ENCODE measurements at regions of chr13 and their contacts with region 1.

Region 1: GRCh38 chr13:83634601-83635000 is 247.7 kb downstream of the SLITRK1 start:
- DNase-seq: no peak
- ATAC-seq: no peak
- H3K4me3 ChIP-seq: no peak overlapping the region
- H3K27ac ChIP-seq: no peak overlapping the region
- H3K4me1 ChIP-seq: no peaks in the 10 kb centered on the region
- H3K27me3 ChIP-seq: no peaks in the 10 kb centered on the region
- CTCF ChIP-seq: no peak

Region 2: GRCh38 chr13:83722443-83722842 is 87.8 kb after region 1 on chr13:
- intact Hi-C with region 1: loop called in 1 of 10 experiments (anchors 10 kb)
- DNase-seq: no peak
- ATAC-seq: no peak
- H3K4me3 ChIP-seq: no peak overlapping the region
- H3K27ac ChIP-seq: no peak overlapping the region
- H3K4me1 ChIP-seq: no peaks in the 10 kb centered on the region
- H3K27me3 ChIP-seq: no peaks in the 10 kb centered on the region
- CTCF ChIP-seq: no peak

Region 3: DNA sequence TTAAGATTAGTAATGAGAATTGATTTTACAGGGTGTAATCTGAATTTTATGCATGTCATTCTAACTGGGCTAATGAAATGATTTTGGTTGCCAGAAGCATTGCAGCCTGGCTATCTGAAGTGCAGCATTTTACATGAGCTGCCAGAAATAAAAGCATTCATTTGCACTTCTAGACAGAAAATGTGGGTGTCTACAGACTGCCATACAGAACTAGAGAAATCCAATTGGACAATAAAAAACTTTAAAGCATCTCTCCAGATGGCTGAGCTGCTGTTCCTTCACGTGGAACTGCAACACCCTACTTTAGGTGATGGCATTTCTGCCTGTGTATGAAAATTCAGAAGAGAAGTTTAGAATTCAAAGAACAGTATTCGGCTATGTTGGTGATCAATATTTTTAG is 697.7 kb after region 1 on chr13:
- intact Hi-C with region 1: no loop called
- DNase-seq: no peak
- ATAC-seq: no peak
- H3K4me3 ChIP-seq: no peak overlapping the region
- H3K27ac ChIP-seq: no peak overlapping the region
- H3K4me1 ChIP-seq: no peaks in the 10 kb centered on the region
- H3K27me3 ChIP-seq: no peaks in the 10 kb centered on the region
- CTCF ChIP-seq: no peak

Measured in heart right ventricle (tissue), 16 donors.